MCF 10A (cell line): ENCODE measurements at regions of chr10 and their contacts with region 1.

Region 1: GRCh38 chr10:125936331-125936730 is 40.0 kb downstream of the FANK1 start:
- DNase-seq: no peak
- H3K4me3 Mint-ChIP-seq: no peak overlapping the region
- H3K27ac Mint-ChIP-seq: no peak overlapping the region
- H3K4me1 Mint-ChIP-seq: peaks cover 4% of the 10 kb centered on the region
- H3K27me3 Mint-ChIP-seq: no peaks in the 10 kb centered on the region
- CTCF ChIP-seq: no peak

Region 2: DNA sequence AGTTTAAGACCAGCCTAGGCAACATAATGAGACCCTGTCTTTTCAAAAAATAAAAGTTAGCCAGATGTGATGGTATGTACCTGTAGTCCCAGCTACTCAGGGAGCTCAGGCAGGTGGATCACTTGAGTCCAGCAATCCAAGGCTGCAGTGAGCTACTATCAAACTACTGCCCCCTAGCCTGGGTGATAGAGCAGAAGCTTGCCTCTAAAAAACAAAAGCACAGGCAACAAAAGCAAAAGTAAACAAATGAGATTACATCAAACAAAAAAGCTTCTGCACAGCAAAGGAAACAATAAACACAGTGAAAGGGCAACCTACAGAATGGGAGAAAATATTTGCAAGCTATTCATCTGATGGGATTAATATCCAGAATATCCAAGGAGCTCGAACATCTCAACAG is 25.4 kb after region 1 on chr10:
- CTCF ChIA-PET with region 1: interaction called, 10 read pairs
- POLR2A ChIA-PET with region 1: interaction called, 3 read pairs
- intact Hi-C with region 1: no loop called
- DNase-seq: no peak
- H3K4me3 Mint-ChIP-seq: no peak overlapping the region
- H3K27ac Mint-ChIP-seq: no peak overlapping the region
- H3K4me1 Mint-ChIP-seq: peaks cover 5% of the 10 kb centered on the region
- H3K27me3 Mint-ChIP-seq: no peaks in the 10 kb centered on the region
- CTCF ChIP-seq: no peak

Region 3: DNA sequence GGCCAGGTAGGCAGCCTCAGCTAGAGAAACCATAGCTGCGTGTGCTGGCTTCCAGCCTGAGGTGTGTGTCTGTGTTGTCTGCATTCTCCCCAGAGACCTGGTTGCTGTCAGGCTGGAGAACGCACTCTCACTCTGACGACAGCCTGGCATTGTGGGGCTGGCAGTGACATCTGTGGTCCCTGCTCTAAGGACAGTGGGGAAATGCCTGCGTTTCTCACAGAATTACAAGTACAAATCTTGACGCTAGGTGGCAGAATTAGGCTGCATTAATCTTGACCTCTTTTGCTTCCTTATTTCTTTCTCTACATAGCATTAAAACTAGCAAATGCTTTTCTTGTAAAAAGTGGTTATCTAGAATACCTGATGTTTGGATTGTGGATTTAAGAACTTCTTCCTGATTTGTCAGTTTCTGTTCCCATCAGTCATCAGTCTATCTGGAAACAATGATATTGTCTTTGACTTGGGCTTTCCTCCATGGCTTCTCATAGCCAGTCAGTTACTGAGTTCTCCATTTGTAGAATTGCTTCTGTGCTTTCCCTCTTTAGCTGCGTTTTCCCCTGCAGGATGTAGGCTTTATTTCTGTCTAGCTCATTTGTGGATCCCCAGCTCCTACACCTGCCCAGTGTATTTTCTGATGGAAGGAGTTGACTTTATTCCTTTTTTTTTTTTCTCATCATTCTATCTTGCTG is 46.1 kb after region 1 on chr10:
- CTCF ChIA-PET with region 1: interaction called, 29 read pairs
- POLR2A ChIA-PET with region 1: no interaction called
- intact Hi-C with region 1: loop called (anchors 2 kb)
- DNase-seq: peak; percentile 73
- H3K4me3 Mint-ChIP-seq: no peak overlapping the region
- H3K27ac Mint-ChIP-seq: no peak overlapping the region
- H3K4me1 Mint-ChIP-seq: no peaks in the 10 kb centered on the region
- H3K27me3 Mint-ChIP-seq: no peaks in the 10 kb centered on the region
- CTCF ChIP-seq: peak; percentile 53

Region 4: DNA sequence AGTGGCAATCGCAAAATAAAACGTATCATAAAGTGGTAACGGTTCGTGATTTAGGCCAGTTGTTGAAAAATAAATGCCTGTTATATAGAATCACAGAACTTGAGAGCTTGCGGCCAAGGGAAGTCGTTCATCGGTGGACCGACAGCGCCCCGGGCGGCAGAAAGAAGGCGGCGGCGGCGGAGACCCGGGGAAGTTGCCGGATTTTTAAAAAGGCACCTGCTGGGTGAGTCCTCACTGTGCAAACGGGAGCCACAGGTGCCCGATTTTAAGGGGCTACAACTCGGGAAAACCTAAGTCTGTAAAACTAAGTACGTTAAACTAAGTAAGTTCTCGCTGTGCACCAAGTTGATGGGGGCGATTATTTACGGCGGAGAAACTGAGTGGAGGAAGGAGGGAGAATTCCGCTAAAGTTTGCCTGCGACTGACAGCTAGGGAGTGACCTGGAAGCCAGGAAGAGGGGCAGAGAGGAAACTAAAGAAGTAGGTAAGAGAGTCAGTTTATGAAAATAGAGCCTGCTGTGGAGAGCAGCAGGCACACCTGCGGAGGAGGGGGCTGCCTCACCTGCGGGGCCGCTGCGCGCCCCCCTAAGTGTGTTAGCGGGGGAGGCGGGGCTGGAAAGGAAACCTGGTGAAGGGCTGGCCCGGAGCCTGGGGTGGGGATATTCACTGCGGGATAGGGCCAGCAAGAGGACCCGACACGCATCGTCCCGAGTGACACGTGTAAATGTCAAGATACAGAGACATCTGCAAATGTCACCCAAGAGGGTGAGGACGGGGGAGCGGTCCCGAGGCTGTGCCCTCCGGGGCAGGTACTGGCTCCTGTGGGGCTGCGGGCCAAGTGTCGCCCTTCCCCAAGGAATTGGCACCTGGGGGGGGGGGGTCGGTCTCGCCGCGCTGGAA is 450.9 kb after region 1 on chr10:
- CTCF ChIA-PET with region 1: interaction called, 5 read pairs
- POLR2A ChIA-PET with region 1: no interaction called
- intact Hi-C with region 1: loop called (anchors 1 kb)
- DNase-seq: peak; percentile 78
- H3K4me3 Mint-ChIP-seq: peak overlapping the region; percentile 86
- H3K27ac Mint-ChIP-seq: peak overlapping the region; percentile 18
- H3K4me1 Mint-ChIP-seq: peaks cover 9% of the 10 kb centered on the region
- H3K27me3 Mint-ChIP-seq: peaks cover 11% of the 10 kb centered on the region
- CTCF ChIP-seq: peak; percentile 74

Region 5: GRCh38 chr10:126407846-126408245 is 471.5 kb after region 1 on chr10:
- CTCF ChIA-PET with region 1: no interaction called
- POLR2A ChIA-PET with region 1: no interaction called
- intact Hi-C with region 1: no loop called
- DNase-seq: peak; percentile 71
- H3K4me3 Mint-ChIP-seq: no peak overlapping the region
- H3K27ac Mint-ChIP-seq: peak overlapping the region; percentile 31
- H3K4me1 Mint-ChIP-seq: no peaks in the 10 kb centered on the region
- H3K27me3 Mint-ChIP-seq: no peaks in the 10 kb centered on the region
- CTCF ChIP-seq: no peak

Region 6: DNA sequence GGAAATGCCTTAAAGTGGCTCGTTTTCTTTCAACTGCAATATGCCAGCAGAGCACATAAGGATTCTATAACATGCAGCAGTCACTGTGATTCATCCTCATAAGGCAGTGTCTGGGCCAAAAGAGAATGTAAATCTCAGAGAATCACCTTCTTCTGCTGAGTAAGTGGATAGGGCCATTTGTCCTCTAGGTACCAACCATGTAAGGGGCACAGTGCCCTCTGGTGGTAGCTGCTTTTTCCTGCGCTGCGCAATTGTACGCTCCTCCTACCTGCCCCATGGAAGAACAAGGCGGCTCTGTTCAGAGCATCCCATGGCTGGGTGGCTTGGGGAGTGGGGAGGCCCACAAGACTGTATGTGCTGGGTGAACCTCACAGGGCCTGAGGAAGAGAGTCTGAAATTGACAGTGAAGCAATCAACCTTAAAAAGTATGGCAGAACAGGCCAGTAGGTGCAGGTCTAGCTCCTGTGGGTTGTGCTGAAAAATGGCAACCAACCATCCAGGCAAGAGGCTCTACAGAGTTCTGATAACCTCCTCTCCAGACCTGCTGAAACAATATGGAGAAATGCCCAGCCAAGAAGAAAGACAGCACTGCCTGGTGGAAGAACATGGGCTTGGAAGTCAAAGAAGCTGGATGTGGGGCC is 812.8 kb after region 1 on chr10:
- CTCF ChIA-PET with region 1: interaction called, 3 read pairs
- POLR2A ChIA-PET with region 1: interaction called, 3 read pairs
- intact Hi-C with region 1: loop called (anchors 1 kb)
- DNase-seq: peak; percentile 80
- H3K4me3 Mint-ChIP-seq: no peak overlapping the region
- H3K27ac Mint-ChIP-seq: no peak overlapping the region
- H3K4me1 Mint-ChIP-seq: no peaks in the 10 kb centered on the region
- H3K27me3 Mint-ChIP-seq: peaks cover 40% of the 10 kb centered on the region
- CTCF ChIP-seq: peak; percentile 88